ENCODE measurements at regions of chr16 and their contacts with region 1.

Region 1: GRCh38 chr16:4734063-4734729 is at the starts of genes ANKS3 and DNAAF8:
- DNase-seq: peak; percentile 90
- ATAC-seq: peak; percentile 74
- H3K4me3 Mint-ChIP-seq: peak within 1 kb of the TSS; percentile 83
- H3K27ac Mint-ChIP-seq: peak within 1 kb of the TSS; percentile 81
- H3K4me1 Mint-ChIP-seq: peaks cover 15% of the 10 kb centered on the region
- H3K27me3 Mint-ChIP-seq: no peaks in the 10 kb centered on the region
- total RNA-seq, gene ANKS3: 20.4 to 20.5 TPM
- total RNA-seq, gene DNAAF8: 0.23 TPM in 1 of 2 experiments, not detected in the other

Region 2: DNA sequence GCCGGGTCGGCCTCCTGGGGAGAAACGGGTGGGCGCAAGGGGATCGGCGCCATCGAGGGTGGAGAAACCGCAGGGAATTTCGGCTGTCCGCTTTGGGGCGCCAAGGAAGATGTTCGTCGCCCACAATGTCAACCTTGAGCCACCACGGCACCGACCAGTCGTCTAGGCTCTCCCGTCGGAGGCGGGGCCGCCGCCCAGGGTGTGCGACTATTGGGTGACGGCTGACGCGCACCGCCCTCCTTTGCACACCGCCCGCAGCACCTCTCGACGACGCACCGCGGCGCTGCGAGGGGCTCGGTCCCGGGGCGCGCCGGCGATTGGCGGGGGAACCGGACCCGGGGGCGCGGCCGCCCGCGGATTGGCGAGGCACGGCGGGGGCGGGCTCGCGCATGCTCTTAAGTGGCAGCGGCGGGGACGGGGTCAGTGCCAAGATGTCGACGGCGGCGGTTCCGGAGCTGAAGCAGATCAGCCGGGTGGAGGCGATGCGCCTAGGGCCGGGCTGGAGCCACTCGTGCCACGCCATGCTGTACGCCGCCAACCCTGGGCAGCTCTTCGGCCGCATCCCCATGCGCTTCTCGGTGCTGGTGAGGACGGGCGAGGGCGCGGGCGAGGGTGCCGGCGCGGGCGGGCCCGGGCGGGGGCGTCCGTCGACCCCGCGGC is 40.8 kb before region 1 on chr16 and contains the start of gene NUDT16L1:
- POLR2A ChIA-PET with region 1: interaction called, 22 read pairs
- DNase-seq: peak; percentile 100
- ATAC-seq: peak; percentile 91
- H3K4me3 Mint-ChIP-seq: peak within 1 kb of the TSS; percentile 82
- H3K27ac Mint-ChIP-seq: peak within 1 kb of the TSS; percentile 83
- H3K4me1 Mint-ChIP-seq: peaks cover 12% of the 10 kb centered on the region
- H3K27me3 Mint-ChIP-seq: no peaks in the 10 kb centered on the region
- total RNA-seq, gene NUDT16L1: 40.7 to 42.7 TPM

Region 3: GRCh38 chr16:4746991-4747574 is 12.9 kb after region 1 on chr16:
- POLR2A ChIA-PET with region 1: interaction called, 28 read pairs
- DNase-seq: no peak
- ATAC-seq: no peak
- H3K4me3 Mint-ChIP-seq: no peak overlapping the region
- H3K27ac Mint-ChIP-seq: peak overlapping the region; percentile 77
- H3K4me1 Mint-ChIP-seq: peaks cover 23% of the 10 kb centered on the region
- H3K27me3 Mint-ChIP-seq: peaks cover 2% of the 10 kb centered on the region

Region 4: GRCh38 chr16:4766874-4767628 is 32.9 kb after region 1 on chr16 and contains the start of gene ZNF500:
- POLR2A ChIA-PET with region 1: interaction called, 13 read pairs
- DNase-seq: peak; percentile 97
- ATAC-seq: peak; percentile 75
- H3K4me3 Mint-ChIP-seq: peak within 1 kb of the TSS; percentile 94
- H3K27ac Mint-ChIP-seq: peak within 1 kb of the TSS; percentile 89
- H3K4me1 Mint-ChIP-seq: peaks cover 23% of the 10 kb centered on the region
- H3K27me3 Mint-ChIP-seq: no peaks in the 10 kb centered on the region
- total RNA-seq, gene ZNF500: 22.5 to 23.8 TPM

Region 5: DNA sequence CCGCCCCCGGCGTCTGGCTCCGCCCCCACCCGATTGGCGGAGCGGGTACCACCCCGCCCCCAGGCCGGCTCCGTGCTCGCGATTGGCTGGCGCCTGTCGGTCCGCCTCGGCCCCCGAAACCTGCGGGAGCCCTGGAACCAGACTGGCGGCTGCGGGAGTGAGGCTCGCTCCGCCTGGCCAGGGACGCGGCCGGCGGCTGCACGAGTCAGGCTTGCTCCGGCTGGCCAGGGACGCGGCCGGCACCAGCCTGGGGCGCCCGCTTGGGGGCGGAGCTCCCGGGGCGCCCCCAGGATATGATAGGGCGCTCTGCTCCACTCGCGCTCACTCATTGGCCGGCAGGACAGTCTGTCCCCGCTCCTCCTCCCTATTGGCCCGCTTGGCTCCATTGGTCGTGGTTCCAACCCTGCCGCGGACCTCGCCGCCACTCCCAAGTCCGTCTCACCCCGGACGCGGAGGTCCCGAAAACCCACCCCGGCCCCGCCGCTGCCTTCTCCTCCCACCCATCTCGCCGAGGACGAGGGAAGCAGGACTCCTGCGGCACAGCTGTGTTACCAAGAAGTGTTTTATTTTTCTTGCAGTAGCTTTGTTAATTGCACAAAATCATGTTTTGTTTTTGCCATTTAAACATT is 68.6 kb after region 1 on chr16:
- POLR2A ChIA-PET with region 1: interaction called, 12 read pairs
- DNase-seq: peak; percentile 98
- ATAC-seq: peak; percentile 92
- H3K4me3 Mint-ChIP-seq: peak overlapping the region; percentile 89
- H3K27ac Mint-ChIP-seq: peak overlapping the region; percentile 30
- H3K4me1 Mint-ChIP-seq: peaks cover 12% of the 10 kb centered on the region
- H3K27me3 Mint-ChIP-seq: no peaks in the 10 kb centered on the region